CD14-positive monocyte (primary cell): ENCODE measurements at regions of chr19 and their contacts with region 1.

Region 1: DNA sequence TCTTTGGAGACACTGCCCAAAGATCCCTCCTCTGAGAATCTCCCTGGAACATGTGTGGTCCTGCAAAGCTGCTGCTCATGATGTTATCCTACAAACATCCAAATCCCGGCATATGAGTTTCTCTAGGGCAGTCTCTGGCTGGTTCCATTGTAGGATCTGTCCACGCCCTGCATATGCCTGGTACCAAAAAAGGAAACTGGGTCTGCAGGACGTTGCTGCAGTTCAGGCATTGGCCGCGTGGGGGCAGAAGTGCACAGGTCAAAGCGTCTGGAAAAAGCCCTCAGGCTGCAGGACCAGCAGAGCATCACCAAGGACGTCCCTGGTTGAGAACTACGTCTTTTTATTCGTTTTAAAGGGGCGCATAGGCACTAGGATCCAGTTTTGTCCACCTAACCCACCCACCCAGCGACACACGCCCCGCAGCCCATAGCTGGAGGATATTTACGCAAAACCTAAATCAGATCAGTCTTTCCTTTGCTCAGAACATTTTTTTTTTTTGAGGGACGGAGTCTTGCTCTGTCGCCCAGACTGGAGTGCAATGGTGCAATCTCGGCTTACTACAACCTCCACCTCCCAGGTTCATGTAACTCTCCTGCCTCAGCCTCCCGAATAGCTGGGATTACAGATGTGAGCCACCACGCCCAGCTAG is 12.9 kb upstream of the ZNF564 start:
- DNase-seq: peak; percentile 66 to 72 (median 71)
- H3K4me3 ChIP-seq: no peak overlapping the region
- H3K4me3 Mint-ChIP-seq: no peak overlapping the region
- H3K27ac ChIP-seq: no peak overlapping the region
- H3K27ac Mint-ChIP-seq: no peak overlapping the region
- H3K4me1 ChIP-seq: no peaks in the 10 kb centered on the region
- H3K4me1 Mint-ChIP-seq: peaks cover 2% of the 10 kb centered on the region
- H3K27me3 ChIP-seq: no peaks in the 10 kb centered on the region
- H3K27me3 Mint-ChIP-seq: peaks cover 2 to 8% (median 4%) of the 10 kb centered on the region in 3 donors
- CTCF ChIP-seq: peak; percentile 95

Region 2: GRCh38 chr19:12672744-12673143 is 108.6 kb after region 1 on chr19:
- intact Hi-C with region 1: loop called (anchors 1 to 2 kb)
- DNase-seq: no peak
- H3K4me3 ChIP-seq: no peak overlapping the region
- H3K4me3 Mint-ChIP-seq: no peak overlapping the region
- H3K27ac ChIP-seq: no peak overlapping the region
- H3K27ac Mint-ChIP-seq: peak overlapping the region in 2 of 7 donors; percentile 48 to 63
- H3K4me1 ChIP-seq: peaks cover 22 to 34% of the 10 kb centered on the region in 2 donors
- H3K4me1 Mint-ChIP-seq: peaks cover 33% of the 10 kb centered on the region
- H3K27me3 ChIP-seq: no peaks in the 10 kb centered on the region
- H3K27me3 Mint-ChIP-seq: no peaks in the 10 kb centered on the region
- CTCF ChIP-seq: no peak

Region 3: GRCh38 chr19:12757544-12758274 is 193.6 kb after region 1 on chr19:
- intact Hi-C with region 1: loop called in 1 of 2 experiments (anchors 2 kb)
- DNase-seq: peak; percentile 54 to 72 (median 65)
- H3K4me3 ChIP-seq: peak overlapping the region in 1 of 3 experiments; percentile 46
- H3K4me3 Mint-ChIP-seq: peak overlapping the region; percentile 43 to 78
- H3K27ac ChIP-seq: no peak overlapping the region
- H3K27ac Mint-ChIP-seq: no peak overlapping the region
- H3K4me1 ChIP-seq: peaks cover 4 to 8% of the 10 kb centered on the region in 2 donors
- H3K4me1 Mint-ChIP-seq: peaks cover 12% of the 10 kb centered on the region
- H3K27me3 ChIP-seq: peaks cover 0 to 8% of the 10 kb centered on the region in 2 donors
- H3K27me3 Mint-ChIP-seq: peaks cover 10 to 21% (median 16%) of the 10 kb centered on the region in 3 donors
- CTCF ChIP-seq: peak; percentile 99